A673 (cell line): ENCODE measurements at regions of chr14 and their contacts with region 1.

Region 1: DNA sequence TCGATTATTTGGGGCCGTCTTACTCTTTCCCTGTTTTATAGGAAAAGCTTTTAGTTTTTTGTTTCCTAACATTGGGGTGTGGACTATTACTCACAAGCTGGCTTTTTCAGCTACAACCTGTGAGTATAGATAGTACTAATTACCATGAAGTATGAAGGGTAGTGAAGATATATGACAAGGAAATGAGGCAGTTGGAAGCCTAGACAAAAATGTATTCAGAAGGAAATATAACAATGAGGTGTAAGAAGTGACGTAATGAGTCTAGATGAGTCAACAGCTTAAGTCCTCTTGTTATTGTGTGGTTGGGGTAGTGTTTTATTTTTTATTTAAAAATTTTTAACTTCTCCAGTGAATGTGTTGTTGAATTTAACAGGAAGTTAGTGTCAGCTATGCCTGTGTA is 804.5 kb downstream of the NRXN3 start:
- DNase-seq: peak; percentile 71
- H3K4me3 ChIP-seq: no peak overlapping the region
- H3K27ac ChIP-seq: no peak overlapping the region
- H3K4me1 ChIP-seq: peaks cover 20% of the 10 kb centered on the region
- H3K27me3 ChIP-seq: no peaks in the 10 kb centered on the region
- CTCF ChIP-seq: no peak

Region 2: GRCh38 chr14:78448164-78449094 is 526.3 kb before region 1 on chr14:
- CTCF ChIA-PET with region 1: no interaction called
- POLR2A ChIA-PET with region 1: no interaction called
- intact Hi-C with region 1: no loop called
- DNase-seq: peak; percentile 60
- H3K4me3 ChIP-seq: no peak overlapping the region
- H3K27ac ChIP-seq: no peak overlapping the region
- H3K4me1 ChIP-seq: no peaks in the 10 kb centered on the region
- H3K27me3 ChIP-seq: no peaks in the 10 kb centered on the region
- CTCF ChIP-seq: peak; percentile 83

Region 3: DNA sequence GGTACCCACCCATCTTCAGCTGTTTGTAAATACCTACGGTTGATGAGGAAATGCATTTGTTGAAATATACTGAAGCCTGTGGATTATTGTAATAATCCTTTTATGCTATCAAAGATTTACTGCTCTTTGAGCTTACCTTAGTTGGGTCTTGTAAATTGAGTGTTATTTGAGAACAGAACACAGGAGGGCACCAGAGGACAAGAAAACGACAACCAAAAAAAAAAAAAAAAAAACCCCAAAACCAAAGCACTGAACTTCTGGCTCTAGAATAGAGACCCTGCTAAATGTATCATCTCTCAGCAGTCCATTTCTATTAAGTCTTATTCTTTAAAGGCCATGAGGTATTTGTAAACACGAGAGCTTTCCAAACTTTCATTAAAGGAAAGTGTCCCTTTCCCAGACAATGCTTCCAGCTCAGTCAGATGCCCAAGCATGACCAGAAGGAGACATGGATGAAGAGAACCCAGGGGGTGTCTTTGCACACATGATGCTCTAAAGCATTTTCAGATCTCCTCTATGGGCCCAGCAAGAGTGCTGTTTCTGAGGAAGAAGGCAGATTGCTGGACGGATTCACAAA is 40.7 kb before region 1 on chr14:
- CTCF ChIA-PET with region 1: no interaction called
- POLR2A ChIA-PET with region 1: interaction called, 22 read pairs
- intact Hi-C with region 1: no loop called
- DNase-seq: peak; percentile 39
- H3K4me3 ChIP-seq: no peak overlapping the region
- H3K27ac ChIP-seq: no peak overlapping the region
- H3K4me1 ChIP-seq: no peaks in the 10 kb centered on the region
- H3K27me3 ChIP-seq: peaks cover 3% of the 10 kb centered on the region
- CTCF ChIP-seq: peak; percentile 64

Region 4: DNA sequence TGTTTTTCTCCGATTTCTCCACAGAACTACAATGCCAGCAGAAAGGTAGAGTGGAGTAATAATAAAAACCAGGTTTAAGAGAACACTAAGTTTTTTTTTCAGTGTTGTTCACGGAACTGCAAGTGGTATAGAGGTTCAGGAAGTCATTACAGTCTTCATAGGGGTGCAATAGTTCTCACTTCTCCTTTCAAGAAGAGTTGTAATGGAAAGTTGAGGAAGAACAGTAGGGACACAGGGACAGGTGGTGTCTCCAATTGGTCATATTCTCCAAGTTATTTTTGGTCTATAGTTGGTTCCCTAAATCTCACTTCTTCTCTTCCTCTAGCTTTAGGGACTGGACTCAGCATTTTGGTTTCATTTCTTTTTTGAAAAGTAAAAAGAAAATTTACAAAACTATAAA is 89.5 kb after region 1 on chr14:
- CTCF ChIA-PET with region 1: no interaction called
- POLR2A ChIA-PET with region 1: no interaction called
- intact Hi-C with region 1: no loop called
- DNase-seq: no peak
- H3K4me3 ChIP-seq: no peak overlapping the region
- H3K27ac ChIP-seq: no peak overlapping the region
- H3K4me1 ChIP-seq: no peaks in the 10 kb centered on the region
- H3K27me3 ChIP-seq: no peaks in the 10 kb centered on the region
- CTCF ChIP-seq: no peak

Region 5: GRCh38 chr14:80629606-80630005 is 1654.9 kb after region 1 on chr14:
- CTCF ChIA-PET with region 1: no interaction called
- POLR2A ChIA-PET with region 1: interaction called, 10 read pairs
- intact Hi-C with region 1: no loop called
- DNase-seq: no peak
- H3K4me3 ChIP-seq: no peak overlapping the region
- H3K27ac ChIP-seq: no peak overlapping the region
- H3K4me1 ChIP-seq: no peaks in the 10 kb centered on the region
- H3K27me3 ChIP-seq: no peaks in the 10 kb centered on the region
- CTCF ChIP-seq: no peak